Naive thymus-derived CD4-positive, alpha-beta T cell (primary cell): ENCODE measurements at regions of chr20 and their contacts with region 1.

Region 1: GRCh38 chr20:3204124-3204822 is at the start of gene DDRGK1:
- DNase-seq: peak; percentile 79 to 95 (median 90)
- ATAC-seq: peak; percentile 96
- H3K4me3 ChIP-seq: peak within 1 kb of the TSS; percentile 99
- H3K4me3 Mint-ChIP-seq: peak within 1 kb of the TSS; percentile 91 to 97 (median 95)
- H3K27ac ChIP-seq: peak within 1 kb of the TSS; percentile 91
- H3K27ac Mint-ChIP-seq: peak within 1 kb of the TSS; percentile 91 to 98 (median 96)
- H3K4me1 ChIP-seq: peaks cover 12 to 18% of the 10 kb centered on the region in 2 donors
- H3K4me1 Mint-ChIP-seq: peaks cover 21 to 26% (median 22%) of the 10 kb centered on the region in 7 donors
- H3K27me3 ChIP-seq: no peaks in the 10 kb centered on the region
- H3K27me3 Mint-ChIP-seq: no peaks in the 10 kb centered on the region
- total RNA-seq, gene DDRGK1: 39.4 to 60.3 (median 46.6) TPM

Region 2: DNA sequence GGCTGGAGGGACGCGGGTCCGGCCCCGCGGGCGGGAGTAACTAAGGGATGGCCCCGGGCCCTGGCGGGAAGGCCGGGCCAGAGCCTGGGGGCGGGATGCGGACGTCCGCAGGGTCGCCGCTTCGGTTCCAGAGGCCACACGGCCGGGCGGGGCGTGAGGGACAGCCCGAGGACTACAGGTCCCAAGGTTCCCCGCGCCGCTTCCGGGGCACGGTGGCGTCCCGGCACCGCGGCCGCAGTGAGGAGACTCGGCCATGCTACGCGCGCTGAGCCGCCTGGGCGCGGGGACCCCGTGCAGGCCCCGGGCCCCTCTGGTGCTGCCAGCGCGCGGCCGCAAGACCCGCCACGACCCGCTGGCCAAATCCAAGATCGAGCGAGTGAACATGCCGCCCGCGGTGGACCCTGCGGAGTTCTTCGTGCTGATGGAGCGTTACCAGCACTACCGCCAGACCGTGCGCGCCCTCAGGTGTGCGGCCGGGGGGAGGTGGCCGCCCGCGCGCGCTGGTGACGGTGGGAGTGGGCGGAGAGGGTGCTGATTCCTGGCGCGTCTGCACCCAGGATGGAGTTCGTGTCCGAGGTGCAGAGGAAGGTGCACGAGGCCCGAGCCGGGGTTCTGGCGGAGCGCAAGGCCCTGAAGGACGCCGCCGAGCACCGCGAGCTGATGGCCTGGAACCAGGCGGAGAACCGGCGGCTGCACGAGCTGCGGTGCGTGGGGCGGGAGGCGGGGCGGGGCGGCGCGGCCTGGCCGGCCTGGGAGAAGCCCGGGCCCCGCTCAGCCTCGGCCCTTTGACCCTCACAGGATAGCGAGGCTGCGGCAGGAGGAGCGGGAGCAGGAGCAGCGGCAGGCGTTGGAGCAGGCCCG is 158.2 kb before region 1 on chr20 and contains the start of gene MRPS26:
- CTCF ChIA-PET with region 1: no interaction called
- POLR2A ChIA-PET with region 1: no interaction called
- intact Hi-C with region 1: loop called (anchors 1 to 5 kb)
- DNase-seq: peak; percentile 63 to 89 (median 76)
- ATAC-seq: peak; percentile 93
- H3K4me3 ChIP-seq: peak within 1 kb of the TSS; percentile 91
- H3K4me3 Mint-ChIP-seq: peak within 1 kb of the TSS; percentile 82 to 95 (median 92)
- H3K27ac ChIP-seq: peak within 1 kb of the TSS; percentile 70
- H3K27ac Mint-ChIP-seq: peak within 1 kb of the TSS; percentile 69 to 90 (median 79)
- H3K4me1 ChIP-seq: peaks cover 4 to 11% of the 10 kb centered on the region in 2 donors
- H3K4me1 Mint-ChIP-seq: peaks cover 11 to 23% (median 18%) of the 10 kb centered on the region in 7 donors
- H3K27me3 ChIP-seq: no peaks in the 10 kb centered on the region
- H3K27me3 Mint-ChIP-seq: no peaks in the 10 kb centered on the region
- total RNA-seq, gene MRPS26: 22.2 to 41.6 (median 29.5) TPM